Gastrocnemius medialis (tissue), 4 donors: ENCODE measurements at regions of chr7 and their contacts with region 1.

Region 1: GRCh38 chr7:27739909-27740448 is at the start of gene TAX1BP1:
- DNase-seq: peak; percentile 93 to 94
- ATAC-seq: peak; percentile 95 to 97
- H3K4me3 ChIP-seq: peak within 1 kb of the TSS; percentile 86 to 98 (median 96)
- H3K27ac ChIP-seq: peak within 1 kb of the TSS; percentile 94 to 99 (median 98)
- H3K4me1 ChIP-seq: peaks cover 24 to 30% of the 10 kb centered on the region in 2 donors
- H3K27me3 ChIP-seq: no peaks in the 10 kb centered on the region
- CTCF ChIP-seq: no peak
- POLR2A ChIP-seq: peak; percentile 96 to 97
- total RNA-seq, gene TAX1BP1: 110 to 136 (median 113) TPM

Region 2: DNA sequence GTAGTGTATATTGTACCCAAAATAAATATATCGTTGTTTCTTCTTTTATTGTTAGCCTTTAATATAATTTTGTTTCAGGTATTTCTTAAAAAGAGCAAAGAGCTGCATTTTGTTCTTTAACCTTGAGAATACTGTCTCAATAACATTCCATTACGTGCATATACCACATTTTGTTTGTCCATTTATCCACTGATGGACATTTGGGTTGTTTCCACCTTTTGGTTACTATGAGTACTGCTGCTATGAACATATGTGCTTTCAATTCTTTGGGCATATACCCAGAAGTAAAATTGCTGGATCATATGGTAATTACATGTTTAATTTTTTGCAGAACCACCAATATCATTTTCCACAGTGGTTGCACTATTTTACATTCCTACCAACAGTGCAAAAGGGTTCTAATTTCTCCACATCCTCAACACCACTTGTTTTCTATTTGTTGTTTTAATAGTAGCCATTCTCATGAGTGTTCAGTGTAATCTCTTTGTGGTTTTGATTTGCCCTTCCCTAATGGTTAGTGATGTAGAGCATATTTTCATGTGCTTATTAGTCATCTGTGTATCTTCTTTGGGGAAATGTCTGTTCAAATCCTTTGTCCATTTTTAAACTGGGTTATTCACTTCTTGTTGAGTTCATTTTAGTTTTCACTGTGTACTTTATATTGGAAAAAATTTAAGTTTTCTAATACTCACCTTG is 179.3 kb before region 1 on chr7:
- in situ Hi-C with region 1: no loop called
- intact Hi-C with region 1: no loop called
- DNase-seq: no peak
- ATAC-seq: no peak
- H3K4me3 ChIP-seq: no peak overlapping the region
- H3K27ac ChIP-seq: no peak overlapping the region
- H3K4me1 ChIP-seq: no peaks in the 10 kb centered on the region
- H3K27me3 ChIP-seq: no peaks in the 10 kb centered on the region
- CTCF ChIP-seq: no peak
- POLR2A ChIP-seq: no peak

Region 3: GRCh38 chr7:27586825-27587224 is 153.2 kb before region 1 on chr7:
- in situ Hi-C with region 1: no loop called
- intact Hi-C with region 1: loop called (anchors 10 kb)
- DNase-seq: peak; percentile 22 to 76
- ATAC-seq: peak; percentile 62 to 95
- H3K4me3 ChIP-seq: no peak overlapping the region
- H3K27ac ChIP-seq: no peak overlapping the region
- H3K4me1 ChIP-seq: peaks cover 0 to 3% of the 10 kb centered on the region in 2 donors
- H3K27me3 ChIP-seq: no peaks in the 10 kb centered on the region
- CTCF ChIP-seq: peak in 3 of 5 experiments; percentile 12 to 41 (median 25)
- POLR2A ChIP-seq: no peak

Region 4: GRCh38 chr7:27677912-27678612 is 61.9 kb before region 1 on chr7:
- in situ Hi-C with region 1: loop called in 1 of 4 experiments (anchors 10 kb)
- intact Hi-C with region 1: no loop called
- DNase-seq: no peak
- ATAC-seq: peak; percentile 48 to 68
- H3K4me3 ChIP-seq: no peak overlapping the region
- H3K27ac ChIP-seq: peak overlapping the region in 2 of 4 donors; percentile 2 to 6
- H3K4me1 ChIP-seq: peaks cover 0 to 8% of the 10 kb centered on the region in 2 donors
- H3K27me3 ChIP-seq: no peaks in the 10 kb centered on the region
- CTCF ChIP-seq: no peak
- POLR2A ChIP-seq: no peak

Region 5: GRCh38 chr7:27808626-27809025 is 68.6 kb after region 1 on chr7:
- in situ Hi-C with region 1: no loop called
- intact Hi-C with region 1: no loop called
- DNase-seq: no peak
- ATAC-seq: peak; percentile 91 to 92
- H3K4me3 ChIP-seq: no peak overlapping the region
- H3K27ac ChIP-seq: peak overlapping the region; percentile 4 to 68 (median 44)
- H3K4me1 ChIP-seq: peaks cover 21 to 27% of the 10 kb centered on the region in 2 donors
- H3K27me3 ChIP-seq: no peaks in the 10 kb centered on the region
- CTCF ChIP-seq: no peak
- POLR2A ChIP-seq: no peak

Region 6: DNA sequence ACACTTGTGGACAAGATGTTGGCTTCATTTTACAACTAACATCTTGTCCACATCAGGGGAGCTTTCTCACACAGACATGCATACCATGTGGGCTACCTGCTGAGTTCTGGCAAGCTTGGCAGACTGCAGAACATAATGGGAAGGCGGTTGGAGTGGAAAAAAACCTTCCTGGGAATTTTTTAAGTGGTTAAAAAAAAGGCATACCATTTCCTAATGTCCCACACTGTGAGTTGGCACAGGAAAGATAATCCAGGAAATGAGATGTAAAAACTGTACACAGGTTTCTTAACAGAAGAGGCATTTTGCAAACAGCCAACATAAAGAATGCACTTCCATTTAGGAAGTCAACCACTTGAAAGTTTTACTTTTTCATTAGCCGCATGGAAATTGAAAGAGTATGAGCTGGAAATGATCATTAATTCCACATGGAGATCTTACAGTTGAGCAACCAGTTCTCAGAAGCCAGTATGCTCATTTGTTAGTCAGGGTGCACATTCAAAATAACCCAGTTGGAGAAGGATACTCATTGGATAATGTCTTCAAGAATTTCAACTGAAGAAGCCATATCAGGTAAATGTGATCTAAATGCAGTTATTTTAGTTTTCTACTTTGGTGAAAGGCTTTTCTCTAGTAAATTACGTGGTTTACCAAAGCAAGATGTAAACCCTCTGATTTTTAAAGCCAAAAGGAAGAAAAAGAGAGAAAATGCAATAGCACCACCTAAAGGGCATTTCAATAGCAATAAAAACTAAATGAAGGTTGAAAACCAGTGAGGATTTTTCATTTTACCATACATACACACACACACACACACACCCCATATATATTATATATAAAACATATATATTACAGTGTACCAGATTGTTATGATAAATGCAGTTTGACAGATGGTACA is 193.9 kb after region 1 on chr7:
- in situ Hi-C with region 1: no loop called
- intact Hi-C with region 1: loop called (anchors 10 kb)
- DNase-seq: no peak
- ATAC-seq: no peak
- H3K4me3 ChIP-seq: no peak overlapping the region
- H3K27ac ChIP-seq: no peak overlapping the region
- H3K4me1 ChIP-seq: peaks cover 14 to 16% of the 10 kb centered on the region in 2 donors
- H3K27me3 ChIP-seq: no peaks in the 10 kb centered on the region
- CTCF ChIP-seq: peak in 1 of 5 experiments; percentile 15
- POLR2A ChIP-seq: no peak

Region 7: GRCh38 chr7:28102778-28103177 is 362.8 kb after region 1 on chr7:
- in situ Hi-C with region 1: no loop called
- intact Hi-C with region 1: loop called (anchors 2 kb)
- DNase-seq: peak; percentile 49 to 81
- ATAC-seq: peak; percentile 44 to 83
- H3K4me3 ChIP-seq: no peak overlapping the region
- H3K27ac ChIP-seq: peak overlapping the region; percentile 8 to 89 (median 33)
- H3K4me1 ChIP-seq: peaks cover 42 to 44% of the 10 kb centered on the region in 2 donors
- H3K27me3 ChIP-seq: no peaks in the 10 kb centered on the region
- CTCF ChIP-seq: no peak
- POLR2A ChIP-seq: peak; percentile 16 to 18